ENCODE measurements at regions of chr21 and their contacts with region 1.

Region 1: DNA sequence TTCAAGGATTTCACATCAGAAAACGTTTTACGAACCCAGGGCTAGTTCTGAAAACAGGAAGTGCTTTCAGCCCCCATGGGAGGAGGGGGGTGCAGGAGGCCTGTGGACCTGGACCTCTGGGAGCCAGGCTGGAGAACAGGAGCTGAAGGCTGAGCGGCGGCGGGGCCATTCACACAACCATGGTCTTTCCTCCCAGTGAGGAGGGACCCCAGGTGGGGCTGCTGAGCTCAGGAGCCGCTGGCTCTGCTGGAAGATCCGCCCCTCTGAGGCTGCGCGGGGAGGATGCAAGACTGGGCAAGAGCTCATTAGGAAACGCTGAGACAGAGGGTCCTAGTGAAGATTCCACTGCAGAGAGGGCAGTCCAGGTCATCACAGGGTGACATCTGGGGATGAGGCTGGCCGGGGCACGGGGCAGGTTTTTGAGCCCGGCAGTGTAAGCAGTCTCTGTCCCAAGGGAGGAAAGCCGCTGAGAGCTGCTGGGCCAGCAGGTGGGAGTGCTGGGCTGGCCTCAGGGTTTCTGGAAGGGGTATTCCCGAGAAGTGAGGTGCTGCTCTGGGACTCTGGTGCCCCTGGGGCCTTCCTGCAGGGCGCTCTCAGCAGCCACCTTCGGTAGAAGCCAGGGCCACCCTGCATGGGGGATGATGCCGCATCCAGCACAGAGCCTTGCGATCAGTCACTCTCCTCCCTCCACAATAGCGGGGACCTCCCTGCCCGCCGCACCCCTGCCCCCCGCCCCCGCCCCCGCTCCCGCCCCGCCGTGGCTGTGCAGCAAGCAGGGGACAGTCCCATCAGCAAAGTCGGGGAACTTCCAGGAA is 7.5 kb downstream of the MX2 start:
- DNase-seq: peak; percentile 54 to 65
- ATAC-seq: peak; percentile 27 to 82 (median 54)
- H3K4me3 ChIP-seq: peak overlapping the region; percentile 15 to 61 (median 44)
- H3K27ac ChIP-seq: peak overlapping the region in 9 of 10 donors; percentile 55 to 89 (median 74)
- H3K4me1 ChIP-seq: peaks cover 3 to 62% (median 25%) of the 10 kb centered on the region in 9 donors
- H3K27me3 ChIP-seq: peaks cover 0 to 3% (median 0%) of the 10 kb centered on the region in 7 donors
- CTCF ChIP-seq: peak in 2 of 9 donors; percentile 3 to 20

Region 2: GRCh38 chr21:41425954-41426675 is 56.8 kb after region 1 on chr21 and contains the start of gene MX1:
- intact Hi-C with region 1: loop called in 4 of 10 experiments (anchors 5 to 10 kb)
- DNase-seq: peak; percentile 77 to 81
- ATAC-seq: peak; percentile 84 to 96 (median 94)
- H3K4me3 ChIP-seq: peak within 1 kb of the TSS; percentile 33 to 86 (median 74)
- H3K27ac ChIP-seq: peak within 1 kb of the TSS; percentile 25 to 95 (median 86)
- H3K4me1 ChIP-seq: peaks cover 0 to 53% (median 22%) of the 10 kb centered on the region in 9 donors
- H3K27me3 ChIP-seq: peaks cover 0 to 17% (median 0%) of the 10 kb centered on the region in 7 donors
- CTCF ChIP-seq: no peak
- total RNA-seq, gene MX1: 11.1 to 50.0 (median 20.1) TPM